ENCODE measurements at regions of chr2 and their contacts with region 1.

Region 1: GRCh38 chr2:164015328-164016123 is 279.7 kb upstream of the FIGN start:
- DNase-seq: peak in 1 of 42 donors; percentile 16

Region 2: DNA sequence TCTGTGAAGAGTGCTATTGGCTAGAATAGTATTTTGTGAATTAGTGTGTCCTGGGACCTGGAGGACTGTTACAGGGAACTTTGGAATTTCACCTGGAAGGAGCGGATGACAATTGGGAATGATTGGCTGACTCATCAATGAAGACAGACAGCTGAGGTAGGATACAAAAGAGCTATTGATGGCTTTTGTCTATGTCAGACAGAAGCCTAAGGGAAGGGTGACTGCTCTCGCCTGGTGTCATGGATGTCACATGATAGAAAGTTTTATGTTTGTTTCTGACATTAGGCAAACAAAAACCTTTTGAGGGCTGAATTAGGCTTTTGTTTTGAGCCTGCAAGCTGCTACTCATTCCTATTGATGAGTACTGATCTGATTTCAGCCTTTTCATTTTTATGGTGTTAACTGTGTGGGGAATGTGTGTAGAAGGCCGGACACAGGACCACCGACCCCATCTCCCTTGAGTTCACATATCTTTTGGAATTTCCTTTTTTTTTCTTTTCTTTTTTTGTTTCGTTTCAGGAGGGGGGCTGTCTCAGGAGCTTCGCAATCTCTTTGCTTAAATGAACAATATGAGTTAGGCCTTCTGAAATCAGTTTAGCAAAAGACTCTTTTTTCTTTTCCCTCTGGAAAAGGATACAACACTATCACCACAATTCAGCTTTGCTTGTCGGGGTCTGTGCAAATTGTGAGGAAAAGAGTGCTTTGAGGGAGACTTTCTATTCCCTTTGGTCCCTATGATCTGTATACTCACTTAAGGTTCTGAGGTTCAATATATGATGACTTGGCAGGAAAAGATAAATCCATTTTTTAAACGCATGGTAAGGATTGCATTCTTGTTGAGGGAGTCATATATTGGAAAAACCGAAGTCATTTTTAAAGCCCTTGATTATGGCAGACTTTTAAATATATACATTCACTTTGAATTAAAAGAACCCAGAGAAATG is 71.9 kb before region 1 on chr2:
- intact Hi-C with region 1: loop called (anchors 10 kb)
- DNase-seq: peak in 32 of 42 donors; percentile 7 to 82 (median 48)